ENCODE measurements at regions of chr11 and their contacts with region 1.

Region 1: GRCh38 chr11:69642913-69643632 is 2.1 kb downstream of the CCND1 start:
- DNase-seq: no peak
- H3K4me3 ChIP-seq: peak overlapping the region; percentile 87
- H3K27me3 ChIP-seq: no peaks in the 10 kb centered on the region
- CTCF ChIP-seq: peak; percentile 73

Region 2: GRCh38 chr11:69111624-69112542 is 531.2 kb before region 1 on chr11:
- CTCF ChIA-PET with region 1: interaction called, 10 read pairs
- POLR2A ChIA-PET with region 1: no interaction called
- DNase-seq: no peak
- H3K4me3 ChIP-seq: no peak overlapping the region
- H3K27me3 ChIP-seq: 0 out of 2 replicates have a peak, but pooled peaks cover 7% of the 10 kb centered on the region
- CTCF ChIP-seq: no peak

Region 3: GRCh38 chr11:69296890-69297786 is 345.9 kb before region 1 on chr11:
- CTCF ChIA-PET with region 1: interaction called, 53 read pairs
- POLR2A ChIA-PET with region 1: no interaction called
- DNase-seq: peak; percentile 98
- H3K4me3 ChIP-seq: no peak overlapping the region
- H3K27me3 ChIP-seq: no peaks in the 10 kb centered on the region
- CTCF ChIP-seq: no peak

Region 4: DNA sequence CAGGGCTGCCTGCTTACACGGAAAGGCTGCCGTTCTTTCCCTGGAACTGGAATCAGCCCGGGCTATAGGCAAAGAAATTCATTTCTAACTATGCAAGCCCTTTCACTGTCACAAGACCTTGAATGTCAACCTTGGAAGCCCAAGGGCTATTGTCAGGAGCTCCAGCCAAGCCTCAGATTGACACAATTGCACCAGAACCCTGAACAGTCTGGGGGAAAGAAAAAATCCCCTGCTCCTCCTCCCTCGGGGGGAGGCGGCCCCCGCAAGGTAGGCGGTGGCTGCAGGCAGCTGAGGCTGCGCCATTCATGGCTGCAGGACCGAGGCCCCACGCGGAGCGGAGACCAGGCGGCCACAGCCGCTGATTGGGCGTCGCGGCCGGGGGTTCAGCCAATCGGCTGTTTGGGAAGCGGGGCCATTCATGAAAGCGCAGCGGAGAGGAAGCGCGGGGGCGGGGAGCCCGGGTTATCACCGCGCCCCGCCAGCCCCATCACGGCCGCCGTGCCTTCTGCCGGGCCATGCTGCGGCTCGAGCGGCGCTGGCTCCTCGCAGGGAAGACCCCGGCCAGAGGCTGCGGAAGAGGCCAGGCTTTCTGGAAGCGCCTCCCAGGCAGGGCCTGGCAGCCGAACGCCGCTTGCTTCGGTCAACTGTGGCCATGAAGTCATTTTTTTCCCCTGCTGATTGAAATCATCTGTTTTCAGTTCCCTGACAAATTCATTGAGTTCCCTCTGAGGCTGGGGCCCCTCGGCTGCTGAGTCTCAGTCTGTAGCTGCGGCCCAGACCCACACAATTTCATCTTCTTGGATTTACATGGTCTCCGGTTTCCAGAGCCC is 199.7 kb before region 1 on chr11:
- CTCF ChIA-PET with region 1: interaction called, 20 read pairs
- POLR2A ChIA-PET with region 1: no interaction called
- DNase-seq: peak; percentile 71
- H3K4me3 ChIP-seq: peak overlapping the region; percentile 36
- H3K27me3 ChIP-seq: no peaks in the 10 kb centered on the region
- CTCF ChIP-seq: no peak

Region 5: DNA sequence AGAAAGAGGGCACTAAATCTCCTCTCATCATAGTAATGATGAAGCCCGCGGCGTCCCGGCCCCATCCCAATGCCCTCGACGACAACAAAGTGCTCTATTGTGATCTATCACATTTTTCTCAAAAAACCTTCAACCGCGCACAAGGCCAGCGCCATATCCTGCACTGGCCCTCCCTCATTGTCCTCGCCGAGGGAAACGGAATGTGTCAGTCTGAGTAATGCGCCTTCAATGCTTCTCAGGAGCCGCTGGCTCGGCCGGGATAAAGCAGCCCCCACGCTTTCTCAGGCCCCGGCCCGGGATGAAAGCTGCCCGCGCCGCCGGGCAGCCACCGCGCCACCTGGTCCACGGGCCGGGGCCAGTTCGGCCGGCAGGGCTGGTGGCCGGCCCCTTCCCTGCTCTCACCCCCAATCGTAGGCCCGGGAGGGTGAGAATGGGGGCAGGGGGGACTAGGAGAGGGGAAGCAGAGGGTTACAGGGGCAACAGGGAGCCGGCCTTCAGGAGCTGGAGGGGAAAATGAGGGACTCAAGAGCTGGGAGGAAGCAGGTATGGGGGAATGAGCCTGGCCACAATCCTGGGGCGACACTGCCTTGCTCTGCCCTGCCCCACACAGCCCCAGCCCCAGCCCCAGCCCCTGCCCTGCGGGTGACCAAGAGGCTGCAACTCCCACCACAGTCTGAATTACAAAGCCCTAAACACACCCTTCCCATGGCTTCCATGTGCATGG is 171.6 kb before region 1 on chr11:
- CTCF ChIA-PET with region 1: no interaction called
- POLR2A ChIA-PET with region 1: no interaction called
- DNase-seq: no peak
- H3K4me3 ChIP-seq: no peak overlapping the region
- H3K27me3 ChIP-seq: no peaks in the 10 kb centered on the region
- CTCF ChIP-seq: no peak

Region 6: GRCh38 chr11:69662017-69662698 is 19.1 kb after region 1 on chr11:
- CTCF ChIA-PET with region 1: interaction called, 26 read pairs
- POLR2A ChIA-PET with region 1: no interaction called
- DNase-seq: no peak
- H3K4me3 ChIP-seq: no peak overlapping the region
- H3K27me3 ChIP-seq: no peaks in the 10 kb centered on the region
- CTCF ChIP-seq: peak; percentile 23; the same call in 1 of the 2 replicates

Measured in BJ (cell line).